HepG2 (cell line): ENCODE measurements at regions of chr1 and their contacts with region 1.

Region 1: GRCh38 chr1:209747580-209748262 is 8.1 kb upstream of the TRAF3IP3 start:
- DNase-seq: peak; percentile 89
- ATAC-seq: peak; percentile 100
- H3K4me3 ChIP-seq: peak overlapping the region in 1 of 3 experiments; percentile 24; a peak in 1 of 6 replicates
- H3K27ac ChIP-seq: no peak overlapping the region
- H3K4me1 ChIP-seq: peaks cover 9% of the 10 kb centered on the region
- H3K27me3 ChIP-seq: no peaks in the 10 kb centered on the region; a peak in 1 of 5 replicates
- CTCF ChIP-seq: peak; percentile 92
- EP300 ChIP-seq: no peak
- POLR2A ChIP-seq: no peak
- RAD21 ChIP-seq: peak; percentile 51

Region 2: DNA sequence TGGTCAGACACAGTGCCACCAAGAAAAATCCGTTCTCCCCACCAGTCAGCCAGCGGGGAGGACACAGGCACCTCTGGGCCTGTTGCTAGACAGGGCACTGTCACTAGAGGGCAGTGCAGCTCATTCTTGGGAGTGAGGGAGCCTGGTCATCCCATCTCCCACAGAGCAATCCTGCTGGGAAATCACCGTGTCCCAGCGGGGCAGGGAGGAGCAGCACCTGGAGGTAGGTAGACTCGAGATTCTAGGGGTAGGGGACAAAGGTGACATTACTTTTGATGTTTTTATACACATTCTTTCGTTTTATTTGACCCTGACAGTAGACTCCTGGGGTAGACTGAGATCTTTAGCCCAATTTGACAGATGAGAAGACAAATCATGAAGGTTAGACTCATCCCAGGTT is 170.9 kb before region 1 on chr1:
- CTCF ChIA-PET with region 1: interaction called, 7 read pairs
- POLR2A ChIA-PET with region 1: no interaction called
- in situ Hi-C with region 1: no loop called
- intact Hi-C with region 1: loop called (anchors 5 kb)
- DNase-seq: peak; percentile 44
- ATAC-seq: peak; percentile 100
- H3K4me3 ChIP-seq: no peak overlapping the region
- H3K27ac ChIP-seq: no peak overlapping the region
- H3K4me1 ChIP-seq: no peaks in the 10 kb centered on the region
- H3K27me3 ChIP-seq: no peaks in the 10 kb centered on the region
- CTCF ChIP-seq: peak; percentile 91
- EP300 ChIP-seq: no peak
- POLR2A ChIP-seq: no peak
- RAD21 ChIP-seq: no peak

Region 3: DNA sequence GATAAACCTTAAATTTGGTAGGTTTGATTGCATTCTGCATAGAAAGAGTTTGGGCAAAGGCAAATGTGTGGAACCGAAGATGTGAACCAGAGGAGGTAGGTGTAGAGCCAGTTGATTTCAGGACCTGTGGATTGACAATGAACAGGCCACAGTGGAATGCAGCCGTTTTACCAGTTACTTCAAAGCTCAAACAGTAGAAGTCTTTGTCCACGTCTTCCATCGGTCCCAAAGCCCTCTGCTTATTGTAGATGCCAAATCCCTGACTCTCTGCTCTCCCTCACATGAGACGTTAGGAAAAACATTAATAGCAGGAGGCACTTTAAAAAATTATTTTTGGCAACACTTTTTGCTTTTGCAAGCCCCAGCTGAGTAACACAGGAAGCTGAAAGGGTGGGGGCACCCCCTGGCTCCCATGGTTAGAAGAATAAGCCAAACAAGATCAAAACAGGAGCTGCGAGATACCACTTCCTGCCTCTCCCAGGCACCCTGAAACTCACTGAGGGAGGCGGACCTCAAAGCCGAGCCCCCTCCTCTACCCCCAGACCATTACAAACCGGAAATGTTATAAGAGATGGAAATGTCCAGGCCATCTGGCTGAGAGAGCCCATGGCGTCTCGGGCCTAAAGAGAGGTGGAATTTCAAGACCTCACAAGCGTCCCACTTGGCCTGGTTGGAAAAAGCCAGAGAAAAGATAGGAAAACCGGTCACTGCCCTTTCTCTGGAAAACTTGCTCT is 21.6 kb after region 1 on chr1:
- CTCF ChIA-PET with region 1: no interaction called
- POLR2A ChIA-PET with region 1: no interaction called
- in situ Hi-C with region 1: no loop called
- intact Hi-C with region 1: loop called (anchors 1 kb)
- DNase-seq: no peak
- ATAC-seq: no peak
- H3K4me3 ChIP-seq: no peak overlapping the region
- H3K27ac ChIP-seq: no peak overlapping the region
- H3K4me1 ChIP-seq: no peaks in the 10 kb centered on the region
- H3K27me3 ChIP-seq: peaks cover 1 to 6% of the 10 kb centered on the region in 2 experiments; a peak in 2 of 5 replicates
- CTCF ChIP-seq: no peak
- EP300 ChIP-seq: no peak
- POLR2A ChIP-seq: no peak
- RAD21 ChIP-seq: no peak

Region 4: GRCh38 chr1:209784265-209785169 is 36.8 kb after region 1 on chr1 and contains the start of gene C1orf74:
- CTCF ChIA-PET with region 1: no interaction called
- POLR2A ChIA-PET with region 1: interaction called, 4 read pairs
- in situ Hi-C with region 1: no loop called
- intact Hi-C with region 1: loop called (anchors 2 kb)
- DNase-seq: peak; percentile 83
- ATAC-seq: peak; percentile 99
- H3K4me3 ChIP-seq: peak within 1 kb of the TSS; percentile 48 to 67 (median 49); a peak in 5 of 6 replicates
- H3K27ac ChIP-seq: peak within 1 kb of the TSS; percentile 34
- H3K4me1 ChIP-seq: peaks cover 11% of the 10 kb centered on the region
- H3K27me3 ChIP-seq: peaks cover 0 to 3% of the 10 kb centered on the region in 2 experiments; a peak in 1 of 5 replicates
- CTCF ChIP-seq: no peak
- EP300 ChIP-seq: no peak
- POLR2A ChIP-seq: peak; percentile 47 to 83; a peak in 3 of 4 replicates
- RAD21 ChIP-seq: no peak
- total RNA-seq, gene C1orf74: 0.71 and 0.98 TPM in 2 replicates

Region 5: DNA sequence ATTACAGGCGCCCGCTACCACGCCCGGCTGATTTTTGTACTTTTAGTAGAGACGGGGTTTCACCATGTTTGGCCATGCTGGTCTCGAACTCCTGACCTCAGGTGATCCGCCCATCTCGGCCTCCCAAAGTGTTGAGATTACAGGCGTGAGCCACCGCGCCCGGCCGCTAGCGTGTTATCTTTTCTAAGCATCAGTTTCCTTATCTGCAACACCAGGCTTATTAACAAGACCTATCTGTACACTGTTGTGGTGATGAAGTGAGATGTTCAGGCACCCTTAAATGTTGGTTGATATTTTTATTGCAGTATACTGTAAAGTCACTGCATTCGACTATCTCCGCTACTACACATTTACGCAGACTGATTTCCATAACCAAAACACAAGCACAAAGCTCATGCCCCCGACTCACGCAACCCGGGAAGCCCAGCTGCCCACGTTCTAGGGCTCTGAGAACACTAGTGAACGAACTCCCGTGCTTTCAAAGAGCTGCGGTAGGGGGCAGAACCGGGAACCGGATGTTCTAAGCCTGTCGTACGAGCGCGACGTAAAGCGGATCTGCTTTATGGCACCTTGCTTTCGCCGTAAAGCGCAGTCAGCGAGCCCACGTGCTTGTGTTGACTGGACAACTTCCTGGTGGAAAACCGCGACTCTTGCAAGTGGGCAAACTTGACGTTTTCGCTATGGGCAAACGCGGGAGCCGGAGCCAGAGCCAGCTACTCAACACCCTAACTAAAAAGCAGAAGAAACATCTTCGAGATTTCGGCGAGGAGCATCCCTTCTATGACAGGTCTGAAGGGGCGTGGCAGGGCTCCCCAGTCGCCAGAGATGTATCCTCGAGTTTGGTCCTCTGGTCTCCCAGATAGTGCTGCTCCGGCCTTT is 79.9 kb after region 1 on chr1 and contains the start of gene UTP25:
- CTCF ChIA-PET with region 1: no interaction called
- POLR2A ChIA-PET with region 1: no interaction called
- in situ Hi-C with region 1: no loop called
- intact Hi-C with region 1: loop called (anchors 5 kb)
- DNase-seq: peak; percentile 91
- ATAC-seq: peak; percentile 94
- H3K4me3 ChIP-seq: peak within 1 kb of the TSS; percentile 70 to 92 (median 82)
- H3K27ac ChIP-seq: peak within 1 kb of the TSS; percentile 37
- H3K4me1 ChIP-seq: peaks cover 34% of the 10 kb centered on the region
- H3K27me3 ChIP-seq: no peaks in the 10 kb centered on the region; a peak in 1 of 5 replicates
- CTCF ChIP-seq: peak; percentile 88
- EP300 ChIP-seq: no peak; a peak in 1 of 4 replicates
- POLR2A ChIP-seq: peak; percentile 62 to 83; a peak in 3 of 4 replicates
- RAD21 ChIP-seq: no peak
- total RNA-seq, gene UTP25: 5.7 and 6.6 TPM in 2 replicates